ENCODE measurements at regions of chr1 and their contacts with region 1.

Region 1: DNA sequence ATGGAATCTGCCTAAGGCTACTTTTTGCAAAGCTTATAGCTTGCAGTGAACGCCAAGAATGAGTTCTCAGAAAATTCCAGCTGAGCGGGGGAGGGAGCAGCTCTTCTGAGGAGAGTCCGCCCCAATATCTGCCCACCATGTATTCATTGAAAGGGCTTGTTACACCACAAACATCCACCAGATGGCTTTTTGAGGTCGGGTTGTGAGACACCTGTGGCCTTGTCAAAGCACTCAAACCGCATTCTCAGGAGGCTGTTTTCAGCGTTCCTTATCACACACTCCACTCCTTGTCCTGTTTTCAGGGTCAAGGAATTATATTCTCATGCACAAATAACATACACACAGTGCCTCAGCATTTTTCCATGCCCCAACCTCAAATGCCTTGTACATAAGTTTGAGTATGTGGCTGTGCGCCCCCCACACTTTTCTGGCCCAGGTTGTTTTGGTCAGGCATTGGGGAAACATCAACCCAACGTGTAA is 3.9 kb upstream of the C4BPB start:
- DNase-seq: peak; percentile 71
- ATAC-seq: peak; percentile 71
- H3K4me3 ChIP-seq: peak overlapping the region in 1 of 3 experiments; percentile 0; a peak in 1 of 6 replicates
- H3K27ac ChIP-seq: no peak overlapping the region
- H3K4me1 ChIP-seq: peaks cover 54% of the 10 kb centered on the region
- H3K27me3 ChIP-seq: no peaks in the 10 kb centered on the region; a peak in 1 of 5 replicates
- CTCF ChIP-seq: peak; percentile 86
- EP300 ChIP-seq: no peak
- POLR2A ChIP-seq: no peak
- RAD21 ChIP-seq: peak; percentile 85

Region 2: DNA sequence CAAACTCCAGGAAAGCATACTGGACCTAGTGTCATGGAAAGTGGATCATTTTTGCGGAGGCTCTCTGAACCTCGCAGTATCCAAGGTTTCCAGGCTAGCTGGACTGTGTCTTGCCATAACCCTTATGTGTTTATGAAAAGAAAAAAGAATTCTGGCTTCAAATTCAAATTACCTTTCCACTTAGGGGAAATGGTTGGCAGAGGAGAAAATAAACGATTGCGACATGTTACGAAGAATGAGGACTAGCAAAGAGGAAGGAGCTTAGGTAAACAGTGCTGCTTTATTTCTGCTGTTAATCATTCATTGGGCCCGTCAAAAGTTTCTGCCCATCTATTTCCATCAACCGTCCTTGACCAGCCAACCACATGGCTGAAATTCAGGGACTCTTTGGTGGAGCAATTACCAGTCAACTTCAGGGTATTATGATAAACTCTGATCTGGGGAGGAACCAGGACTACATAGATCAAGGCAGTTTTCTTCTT is 19.2 kb after region 1 on chr1 and contains the start of gene C4BPA:
- CTCF ChIA-PET with region 1: no interaction called
- POLR2A ChIA-PET with region 1: interaction called, 26 read pairs
- in situ Hi-C with region 1: no loop called
- intact Hi-C with region 1: loop called (anchors 2 kb)
- DNase-seq: peak; percentile 90
- ATAC-seq: peak; percentile 97
- H3K4me3 ChIP-seq: no peak within 1 kb of the TSS
- H3K27ac ChIP-seq: peak within 1 kb of the TSS; percentile 52
- H3K4me1 ChIP-seq: peaks cover 36% of the 10 kb centered on the region
- H3K27me3 ChIP-seq: no peaks in the 10 kb centered on the region
- CTCF ChIP-seq: no peak
- EP300 ChIP-seq: peak in 1 of 2 experiments; percentile 51; a peak in 2 of 4 replicates
- POLR2A ChIP-seq: no peak
- RAD21 ChIP-seq: no peak
- total RNA-seq, gene C4BPA: 18.7 and 32.1 TPM in 2 replicates

Region 3: GRCh38 chr1:207152792-207153434 is 68.2 kb after region 1 on chr1:
- CTCF ChIA-PET with region 1: no interaction called
- POLR2A ChIA-PET with region 1: no interaction called
- in situ Hi-C with region 1: no loop called
- intact Hi-C with region 1: loop called (anchors 5 kb)
- DNase-seq: peak; percentile 87
- ATAC-seq: peak; percentile 98
- H3K4me3 ChIP-seq: peak overlapping the region; percentile 58 to 69 (median 68)
- H3K27ac ChIP-seq: peak overlapping the region; percentile 75
- H3K4me1 ChIP-seq: no peaks in the 10 kb centered on the region
- H3K27me3 ChIP-seq: no peaks in the 10 kb centered on the region; a peak in 1 of 5 replicates
- CTCF ChIP-seq: no peak
- EP300 ChIP-seq: peak in 1 of 2 experiments; percentile 45; a peak in 1 of 4 replicates
- POLR2A ChIP-seq: peak; percentile 41 to 69; a peak in 3 of 4 replicates
- RAD21 ChIP-seq: no peak

Region 4: GRCh38 chr1:207240325-207241095 is 155.8 kb after region 1 on chr1:
- CTCF ChIA-PET with region 1: no interaction called
- POLR2A ChIA-PET with region 1: interaction called, 12 read pairs
- in situ Hi-C with region 1: no loop called
- intact Hi-C with region 1: loop called (anchors 2 kb)
- DNase-seq: peak; percentile 74
- ATAC-seq: peak; percentile 58
- H3K4me3 ChIP-seq: no peak overlapping the region; a peak in 3 of 6 replicates
- H3K27ac ChIP-seq: peak overlapping the region; percentile 87
- H3K4me1 ChIP-seq: peaks cover 46% of the 10 kb centered on the region
- H3K27me3 ChIP-seq: no peaks in the 10 kb centered on the region
- CTCF ChIP-seq: no peak
- EP300 ChIP-seq: no peak
- POLR2A ChIP-seq: no peak
- RAD21 ChIP-seq: no peak

Region 5: GRCh38 chr1:207321079-207321789 is 236.5 kb after region 1 on chr1 and contains the start of gene CD55:
- CTCF ChIA-PET with region 1: interaction called, 3 read pairs
- POLR2A ChIA-PET with region 1: interaction called, 14 read pairs
- in situ Hi-C with region 1: no loop called
- intact Hi-C with region 1: loop called (anchors 5 kb)
- DNase-seq: peak; percentile 91
- ATAC-seq: peak; percentile 95
- H3K4me3 ChIP-seq: peak within 1 kb of the TSS; percentile 72 to 91 (median 83)
- H3K27ac ChIP-seq: peak within 1 kb of the TSS; percentile 55
- H3K4me1 ChIP-seq: peaks cover 14% of the 10 kb centered on the region; the same call in 1 of the 2 replicates
- H3K27me3 ChIP-seq: no peaks in the 10 kb centered on the region; a peak in 2 of 5 replicates
- CTCF ChIP-seq: peak; percentile 52
- EP300 ChIP-seq: no peak
- POLR2A ChIP-seq: peak in 1 of 2 experiments; percentile 69; a peak in 1 of 4 replicates
- RAD21 ChIP-seq: no peak; the same call in 1 of the 2 replicates
- total RNA-seq, gene CD55: 2.7 and 6.0 TPM in 2 replicates

Region 6: DNA sequence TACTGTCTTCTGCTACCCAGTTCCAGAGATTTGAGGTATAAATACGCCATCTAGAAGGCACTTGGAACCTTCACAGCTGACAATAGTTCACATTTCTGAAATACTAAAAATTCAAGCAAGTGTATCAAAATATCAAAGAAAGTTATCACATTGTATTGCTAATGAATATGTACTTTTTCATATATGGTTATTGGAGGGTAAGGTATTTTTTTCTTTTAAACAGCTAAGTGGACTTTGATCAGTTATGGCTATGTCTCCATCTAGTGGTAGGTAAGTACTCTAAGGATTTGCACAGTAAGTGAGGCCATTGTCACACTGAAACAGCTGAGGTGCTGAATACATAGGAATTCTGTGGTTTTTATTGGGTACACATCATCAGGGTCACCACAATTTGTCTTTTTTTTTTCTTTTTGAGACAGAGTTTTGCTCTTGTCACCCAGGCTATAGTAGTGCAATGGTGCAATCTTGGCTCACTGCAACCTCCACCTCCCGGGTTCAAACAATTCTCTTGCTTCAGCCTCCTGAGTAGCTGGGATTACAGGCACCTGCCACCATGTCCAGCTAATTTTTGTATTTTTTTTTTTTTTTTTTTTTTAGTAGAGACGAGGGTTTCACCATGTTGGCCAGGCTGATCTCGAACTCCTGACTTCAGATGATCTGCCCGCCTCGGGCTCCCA is 320.2 kb after region 1 on chr1:
- CTCF ChIA-PET with region 1: interaction called, 26 read pairs
- POLR2A ChIA-PET with region 1: no interaction called
- in situ Hi-C with region 1: loop called (anchors 5 kb)
- intact Hi-C with region 1: loop called (anchors 1 kb)
- DNase-seq: peak; percentile 81
- ATAC-seq: peak; percentile 90
- H3K4me3 ChIP-seq: no peak overlapping the region
- H3K27ac ChIP-seq: no peak overlapping the region
- H3K4me1 ChIP-seq: no peaks in the 10 kb centered on the region
- H3K27me3 ChIP-seq: no peaks in the 10 kb centered on the region
- CTCF ChIP-seq: peak; percentile 82
- EP300 ChIP-seq: no peak
- POLR2A ChIP-seq: no peak
- RAD21 ChIP-seq: peak; percentile 69

Region 7: DNA sequence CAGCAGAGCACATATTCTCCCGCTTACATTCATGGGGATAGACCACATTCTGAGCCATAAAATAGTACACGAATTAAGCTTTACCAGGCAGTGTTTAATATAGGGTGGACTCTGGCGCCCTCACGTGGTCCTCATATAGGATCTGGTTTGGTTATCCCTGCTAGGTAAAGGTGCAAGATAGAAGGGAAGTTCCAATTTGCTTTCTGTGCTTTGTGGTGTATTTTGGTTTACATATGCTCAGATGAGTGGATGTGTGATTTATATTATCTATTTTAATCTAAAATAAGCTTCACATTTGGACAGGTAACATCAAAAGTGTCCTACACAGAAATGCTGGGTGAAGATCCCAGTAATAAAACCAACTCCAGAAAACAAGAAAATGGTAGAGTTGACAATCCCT is 414.8 kb after region 1 on chr1:
- CTCF ChIA-PET with region 1: interaction called, 13 read pairs
- POLR2A ChIA-PET with region 1: no interaction called
- in situ Hi-C with region 1: no loop called
- intact Hi-C with region 1: loop called (anchors 1 kb)
- DNase-seq: peak; percentile 47
- ATAC-seq: peak; percentile 80
- H3K4me3 ChIP-seq: no peak overlapping the region
- H3K27ac ChIP-seq: no peak overlapping the region
- H3K4me1 ChIP-seq: no peaks in the 10 kb centered on the region
- H3K27me3 ChIP-seq: peaks cover 4 to 31% of the 10 kb centered on the region in 2 experiments; a peak in 3 of 5 replicates
- CTCF ChIP-seq: peak; percentile 83
- EP300 ChIP-seq: no peak
- POLR2A ChIP-seq: no peak
- RAD21 ChIP-seq: peak; percentile 43; the same call in 1 of the 2 replicates

Measured in HepG2 (cell line).